ENCODE measurements at regions of chrX and their contacts with region 1.

Region 1: DNA sequence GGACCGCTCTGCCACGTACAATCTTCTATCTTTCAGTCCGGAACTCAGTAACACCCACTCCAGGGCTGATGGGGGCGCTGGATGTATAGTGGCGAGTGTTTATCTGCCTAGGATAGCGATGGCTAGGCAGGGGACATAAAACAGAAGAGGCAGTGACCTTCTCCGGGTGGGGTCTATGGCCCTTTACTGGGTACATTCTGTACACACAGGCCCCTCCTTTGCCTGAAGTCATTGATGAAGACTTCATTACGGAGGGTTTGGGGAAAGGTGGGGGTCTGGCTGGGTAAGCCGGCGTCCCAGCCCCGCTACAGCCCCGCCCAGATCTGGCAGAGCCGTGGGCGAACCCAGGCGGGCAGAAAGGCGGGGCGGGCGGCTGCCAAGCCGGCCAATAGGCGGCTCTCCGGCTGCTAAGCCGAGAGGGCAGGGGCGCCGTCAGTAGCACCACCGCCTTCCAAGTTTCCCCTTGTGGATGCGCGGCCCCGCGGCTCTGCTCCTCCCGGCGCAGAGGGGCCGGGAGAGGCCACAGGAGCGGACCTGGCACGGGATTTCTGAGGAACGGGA is at the start of gene CHST7:
- DNase-seq: peak; percentile 53
- H3K4me3 ChIP-seq: peak within 1 kb of the TSS; percentile 42 to 63 (median 56)
- H3K27ac ChIP-seq: no peak within 1 kb of the TSS
- H3K4me1 ChIP-seq: peaks cover 15% of the 10 kb centered on the region
- H3K27me3 ChIP-seq: no peaks in the 10 kb centered on the region
- CTCF ChIP-seq: peak; percentile 12 to 39
- total RNA-seq, gene CHST7: 3.0 to 8.8 TPM

Region 2: GRCh38 chrX:46642145-46642544 is 68.7 kb after region 1 on chrX:
- CTCF ChIA-PET with region 1: no interaction called
- dilution Hi-C with region 1: no loop called
- in situ Hi-C with region 1: no loop called
- intact Hi-C with region 1: loop called (anchors 1 kb)
- DNase-seq: peak; percentile 12
- H3K4me3 ChIP-seq: no peak overlapping the region
- H3K27ac ChIP-seq: no peak overlapping the region
- H3K4me1 ChIP-seq: no peaks in the 10 kb centered on the region
- H3K27me3 ChIP-seq: no peaks in the 10 kb centered on the region
- CTCF ChIP-seq: peak; percentile 28 to 44

Region 3: GRCh38 chrX:46686003-46686645 is 112.7 kb after region 1 on chrX:
- CTCF ChIA-PET with region 1: no interaction called
- dilution Hi-C with region 1: no loop called
- in situ Hi-C with region 1: no loop called
- intact Hi-C with region 1: loop called (anchors 5 kb)
- DNase-seq: peak; percentile 24
- H3K4me3 ChIP-seq: no peak overlapping the region
- H3K27ac ChIP-seq: no peak overlapping the region
- H3K4me1 ChIP-seq: peaks cover 10% of the 10 kb centered on the region
- H3K27me3 ChIP-seq: peaks cover 3% of the 10 kb centered on the region
- CTCF ChIP-seq: peak; percentile 73 to 74